BJ (cell line): ENCODE measurements at regions of chr2 and their contacts with region 1.

Region 1: GRCh38 chr2:223315813-223316212 is 263.8 kb downstream of the KCNE4 start:
- DNase-seq: no peak
- H3K4me3 ChIP-seq: no peak overlapping the region
- H3K27me3 ChIP-seq: no peaks in the 10 kb centered on the region
- CTCF ChIP-seq: no peak

Region 2: GRCh38 chr2:221896505-221897151 is 1419.2 kb before region 1 on chr2:
- CTCF ChIA-PET with region 1: no interaction called
- POLR2A ChIA-PET with region 1: interaction called, 10 read pairs
- DNase-seq: no peak
- H3K4me3 ChIP-seq: no peak overlapping the region
- H3K27me3 ChIP-seq: no peaks in the 10 kb centered on the region
- CTCF ChIP-seq: no peak

Region 3: GRCh38 chr2:223626716-223627115 is 310.9 kb after region 1 on chr2:
- CTCF ChIA-PET with region 1: no interaction called
- POLR2A ChIA-PET with region 1: no interaction called
- DNase-seq: no peak
- H3K4me3 ChIP-seq: no peak overlapping the region
- H3K27me3 ChIP-seq: no peaks in the 10 kb centered on the region
- CTCF ChIP-seq: no peak